ENCODE measurements at regions of chr2 and their contacts with region 1.

Region 1: GRCh38 chr2:201158111-201158929 is 24.6 kb upstream of the CASP10 start:
- DNase-seq: peak; percentile 74 to 87 (median 80)
- ATAC-seq: peak; percentile 93 to 94
- H3K4me3 ChIP-seq: no peak overlapping the region
- H3K27ac ChIP-seq: peak overlapping the region; percentile 80
- H3K4me1 ChIP-seq: peaks cover 9% of the 10 kb centered on the region
- H3K27me3 ChIP-seq: no peaks in the 10 kb centered on the region

Region 2: GRCh38 chr2:200929334-200930249 is 228.7 kb before region 1 on chr2:
- intact Hi-C with region 1: loop called in 1 of 4 experiments (anchors 10 kb)
- DNase-seq: no peak
- ATAC-seq: no peak
- H3K4me3 ChIP-seq: no peak overlapping the region
- H3K27ac ChIP-seq: no peak overlapping the region
- H3K4me1 ChIP-seq: no peaks in the 10 kb centered on the region
- H3K27me3 ChIP-seq: no peaks in the 10 kb centered on the region

Region 3: DNA sequence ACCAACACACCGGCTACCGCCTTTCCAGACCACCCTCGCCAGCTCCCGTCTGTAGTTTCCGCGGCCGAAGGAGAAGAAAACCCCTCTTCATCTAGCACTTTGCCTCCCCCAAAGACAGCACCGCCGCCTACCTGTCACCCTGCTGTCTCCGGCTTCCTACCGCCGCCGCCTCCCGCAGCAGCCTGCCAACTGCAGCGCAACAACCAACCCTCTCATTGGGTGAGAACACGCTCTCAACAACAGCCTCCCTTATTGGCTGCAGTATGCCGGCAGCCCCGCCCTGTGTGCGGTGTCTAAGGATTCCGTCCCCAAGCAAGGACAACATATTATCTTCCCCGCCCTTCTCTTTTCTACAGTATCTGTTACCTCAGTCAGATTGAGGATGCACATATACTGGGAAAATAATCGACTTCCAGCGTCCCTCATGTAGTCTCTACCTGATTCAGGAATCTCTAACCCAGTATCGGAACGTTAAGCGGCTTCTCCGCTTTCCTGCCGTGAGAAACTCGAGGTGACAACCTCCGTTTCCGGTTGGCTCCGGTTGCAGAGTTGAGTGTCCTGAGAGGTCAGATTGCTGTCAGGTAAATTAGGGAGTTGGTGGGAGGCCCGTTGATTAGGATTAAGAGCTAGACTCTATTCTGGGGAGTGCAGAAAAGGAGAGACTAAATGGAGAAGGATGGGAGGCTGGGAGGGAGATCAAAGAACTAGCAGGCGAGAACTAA is 86.7 kb before region 1 on chr2 and contains the starts of genes HYCC2 and NDUFB3:
- intact Hi-C with region 1: loop called in 2 of 4 experiments (anchors 5 to 10 kb)
- DNase-seq: peak; percentile 89 to 96 (median 95)
- ATAC-seq: peak; percentile 99 to 100
- H3K4me3 ChIP-seq: peak within 1 kb of the TSS; percentile 87
- H3K27ac ChIP-seq: peak within 1 kb of the TSS; percentile 80
- H3K4me1 ChIP-seq: no peaks in the 10 kb centered on the region
- H3K27me3 ChIP-seq: no peaks in the 10 kb centered on the region
- total RNA-seq, gene HYCC2: 9.7 to 17.2 (median 13.4) TPM
- total RNA-seq, gene NDUFB3: 296 to 384 (median 313) TPM

Region 4: DNA sequence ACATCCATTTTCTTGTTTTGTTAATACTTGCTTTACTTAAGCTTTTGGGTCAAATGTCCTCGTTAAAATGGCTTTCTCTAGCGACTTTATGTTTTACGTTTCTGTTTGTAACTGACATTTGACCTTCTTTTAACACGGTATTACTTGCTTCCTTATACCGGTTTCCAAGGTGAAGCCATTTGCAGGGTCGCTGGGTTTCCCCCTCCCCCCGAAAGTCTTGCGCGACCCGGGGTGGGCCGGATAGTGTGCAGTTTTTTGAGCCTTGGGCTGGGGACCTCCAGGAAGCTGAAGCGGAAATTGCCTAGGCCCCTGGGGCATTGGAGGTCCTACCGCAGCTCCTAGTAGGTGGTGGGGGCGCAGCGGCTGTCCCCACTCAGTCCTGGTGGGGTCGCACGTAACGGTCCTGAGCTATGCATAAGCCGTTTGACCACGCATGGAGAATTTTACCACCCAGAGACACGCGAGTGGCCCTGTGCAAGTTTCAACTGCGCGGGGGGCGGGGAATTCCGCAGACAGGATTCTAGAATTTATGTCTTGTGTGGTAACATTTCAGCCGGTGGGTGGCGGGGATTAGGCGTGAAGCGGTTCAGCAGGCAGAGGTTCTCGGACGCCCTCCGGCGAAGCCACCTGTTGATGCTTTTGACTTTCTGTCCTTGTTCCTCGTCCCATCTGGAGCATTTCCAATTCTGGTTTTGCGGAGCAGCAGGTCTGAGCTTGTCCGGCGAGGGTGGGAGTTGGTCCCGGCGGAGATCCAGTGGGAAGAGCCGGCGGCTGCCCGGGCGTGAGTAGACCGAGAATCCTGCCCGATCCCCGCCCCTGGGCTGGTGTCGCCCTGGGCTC is 40.0 kb before region 1 on chr2:
- intact Hi-C with region 1: loop called in 3 of 4 experiments (anchors 5 kb)
- DNase-seq: peak; percentile 89 to 95 (median 93)
- ATAC-seq: peak; percentile 48 to 50
- H3K4me3 ChIP-seq: peak overlapping the region; percentile 77
- H3K27ac ChIP-seq: peak overlapping the region; percentile 97
- H3K4me1 ChIP-seq: peaks cover 7% of the 10 kb centered on the region
- H3K27me3 ChIP-seq: no peaks in the 10 kb centered on the region

Measured in right cardiac atrium (tissue), 5 donors.